ENCODE measurements at regions of chr14 and their contacts with region 1.

Region 1: GRCh38 chr14:64841121-64841651 is 38.5 kb downstream of the SPTB start:
- DNase-seq: no peak
- H3K4me3 ChIP-seq: no peak overlapping the region
- H3K27ac ChIP-seq: no peak overlapping the region
- H3K4me1 ChIP-seq: peaks cover 4 to 5% of the 10 kb centered on the region in 2 experiments; a peak in 3 of 4 replicates
- H3K27me3 ChIP-seq: no peaks in the 10 kb centered on the region
- CTCF ChIP-seq: peak; percentile 66
- EP300 ChIP-seq: no peak
- RAD21 ChIP-seq: no peak

Region 2: DNA sequence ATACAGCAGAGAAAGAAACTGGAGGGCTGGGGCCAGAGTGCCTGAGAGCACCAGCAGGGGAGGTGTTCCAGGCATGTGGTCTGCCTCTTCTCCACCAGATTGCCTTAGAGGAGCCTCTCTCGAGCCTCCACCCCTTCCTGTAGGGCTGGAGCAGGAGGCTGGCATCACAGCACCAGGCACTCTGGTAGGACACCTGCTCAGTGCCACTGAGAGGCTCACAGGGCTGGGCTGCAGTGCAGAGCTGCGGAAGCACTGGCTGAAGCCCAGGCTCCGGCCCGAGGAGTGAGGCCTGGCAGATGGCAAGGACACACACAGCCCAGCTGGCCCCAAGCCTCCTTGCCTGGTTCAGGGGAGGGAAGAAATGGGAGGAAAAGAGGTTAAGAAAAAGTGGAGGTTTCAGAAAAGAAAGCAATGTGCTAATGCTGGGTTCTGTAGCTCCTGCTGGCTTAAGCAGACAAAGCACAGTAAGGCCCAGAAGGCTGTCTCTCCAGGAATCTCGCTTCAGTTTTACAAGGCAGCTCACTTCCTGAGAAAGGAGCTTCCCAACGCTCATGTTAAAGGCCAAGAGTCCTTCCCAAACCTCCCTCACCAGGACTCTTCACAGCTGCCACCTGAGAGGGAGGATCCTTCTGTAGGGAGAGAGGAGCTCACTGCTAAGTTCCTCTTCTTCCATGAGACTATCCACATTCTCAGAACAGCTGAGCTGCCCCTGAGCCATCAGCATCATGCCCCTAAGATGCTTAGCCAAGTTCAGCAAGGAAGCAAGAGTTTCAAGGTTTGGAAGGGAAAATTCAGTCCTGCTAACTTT is 14.7 kb after region 1 on chr14:
- CTCF ChIA-PET with region 1: interaction called, 16 read pairs
- POLR2A ChIA-PET with region 1: no interaction called
- DNase-seq: no peak
- H3K4me3 ChIP-seq: no peak overlapping the region
- H3K27ac ChIP-seq: no peak overlapping the region
- H3K4me1 ChIP-seq: no peaks in the 10 kb centered on the region
- H3K27me3 ChIP-seq: no peaks in the 10 kb centered on the region; the same call in 1 of the 2 replicates
- CTCF ChIP-seq: no peak
- EP300 ChIP-seq: no peak
- RAD21 ChIP-seq: no peak

Measured in SK-N-SH (cell line).